Endothelial cell of umbilical vein (primary cell): ENCODE measurements at regions of chr16 and their contacts with region 1.

Region 1: DNA sequence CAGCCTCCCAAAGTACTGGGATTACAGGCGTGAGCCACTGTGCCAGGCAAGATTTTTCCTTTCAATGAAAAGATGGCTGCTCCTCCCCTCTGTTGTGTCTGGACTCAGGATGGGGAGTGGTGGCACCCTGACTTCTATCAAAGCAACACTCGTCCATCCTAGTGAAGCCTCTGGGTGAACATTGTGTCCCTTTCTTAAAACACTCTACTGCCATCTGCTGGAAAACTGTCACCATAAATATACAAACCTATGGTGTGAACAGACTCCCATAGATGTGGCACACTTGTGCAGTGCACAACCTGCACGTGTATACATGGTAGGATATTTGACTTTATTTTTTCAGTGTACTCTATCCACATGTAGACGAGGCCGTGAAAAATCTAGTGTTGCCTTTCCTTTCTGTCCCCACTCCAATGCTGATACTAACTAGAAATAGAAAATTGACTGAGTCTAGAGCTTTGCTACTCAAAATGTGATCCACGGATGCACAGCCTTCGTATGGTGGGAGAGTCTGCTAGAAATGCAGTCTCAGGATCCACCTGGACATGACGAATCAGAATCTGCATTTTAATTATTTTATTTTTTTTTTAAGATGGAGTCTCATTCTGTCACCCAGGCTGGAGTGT is 55.9 kb upstream of the PLCG2 start:
- DNase-seq: peak; percentile 85
- H3K4me3 ChIP-seq: no peak overlapping the region
- H3K27ac ChIP-seq: no peak overlapping the region
- H3K4me1 ChIP-seq: peaks cover 7% of the 10 kb centered on the region
- H3K27me3 ChIP-seq: peaks cover 0 to 3% of the 10 kb centered on the region in 2 experiments
- CTCF ChIP-seq: peak; percentile 47 to 53
- POLR2A ChIP-seq: no peak

Region 2: GRCh38 chr16:81429045-81429521 is 294.1 kb before region 1 on chr16:
- CTCF ChIA-PET with region 1: interaction called, 3 read pairs
- POLR2A ChIA-PET with region 1: no interaction called
- dilution Hi-C with region 1: no loop called
- intact Hi-C with region 1: loop called (anchors 1 kb)
- DNase-seq: peak; percentile 70
- H3K4me3 ChIP-seq: no peak overlapping the region
- H3K27ac ChIP-seq: no peak overlapping the region
- H3K4me1 ChIP-seq: no peaks in the 10 kb centered on the region
- H3K27me3 ChIP-seq: no peaks in the 10 kb centered on the region
- CTCF ChIP-seq: peak; percentile 49 to 69
- POLR2A ChIP-seq: no peak

Region 3: GRCh38 chr16:81551151-81551808 is 171.9 kb before region 1 on chr16:
- CTCF ChIA-PET with region 1: no interaction called
- POLR2A ChIA-PET with region 1: no interaction called
- dilution Hi-C with region 1: no loop called
- intact Hi-C with region 1: no loop called
- DNase-seq: peak; percentile 76
- H3K4me3 ChIP-seq: no peak overlapping the region
- H3K27ac ChIP-seq: peak overlapping the region; percentile 87
- H3K4me1 ChIP-seq: peaks cover 46% of the 10 kb centered on the region
- H3K27me3 ChIP-seq: no peaks in the 10 kb centered on the region
- CTCF ChIP-seq: no peak
- POLR2A ChIP-seq: no peak

Region 4: DNA sequence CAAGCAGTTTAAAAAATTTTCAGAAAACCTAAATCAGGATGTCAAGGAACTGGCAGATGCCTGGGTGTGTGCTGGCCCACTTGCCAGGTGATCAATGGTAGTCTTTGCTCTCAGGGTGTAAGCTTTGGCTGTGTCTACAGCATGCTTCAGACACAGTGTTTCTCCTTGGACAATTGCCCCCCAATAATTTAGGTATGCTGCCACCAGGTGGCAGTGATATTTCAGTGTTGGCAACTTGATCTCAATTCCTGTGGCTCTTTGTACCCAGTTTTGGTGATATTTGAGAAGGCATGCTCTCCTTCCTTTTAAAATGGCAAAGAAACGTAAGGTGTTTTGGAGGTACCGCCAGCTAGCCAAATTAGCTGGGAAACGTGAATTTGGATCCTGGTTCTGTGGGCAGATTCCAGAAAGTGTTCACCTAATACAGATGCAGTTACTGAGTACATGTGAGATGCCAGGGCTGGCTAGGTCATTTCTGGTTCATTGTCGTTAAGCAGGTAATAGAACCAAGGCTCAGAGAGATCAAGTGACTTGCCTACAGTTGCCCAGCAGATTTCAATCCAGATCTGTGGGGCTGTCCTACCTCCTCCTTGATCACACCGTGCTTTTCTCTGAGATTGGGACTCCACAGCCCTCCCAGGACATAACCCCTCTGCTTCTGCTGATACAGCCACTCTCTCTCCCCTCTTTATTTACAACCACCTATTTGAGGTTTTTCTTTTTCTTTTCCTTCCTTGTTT is 99.7 kb before region 1 on chr16:
- CTCF ChIA-PET with region 1: interaction called, 51 read pairs
- POLR2A ChIA-PET with region 1: no interaction called
- dilution Hi-C with region 1: no loop called
- intact Hi-C with region 1: loop called (anchors 1 kb)
- DNase-seq: peak; percentile 80
- H3K4me3 ChIP-seq: no peak overlapping the region
- H3K27ac ChIP-seq: no peak overlapping the region
- H3K4me1 ChIP-seq: peaks cover 31% of the 10 kb centered on the region
- H3K27me3 ChIP-seq: no peaks in the 10 kb centered on the region
- CTCF ChIP-seq: peak; percentile 57 to 59
- POLR2A ChIP-seq: no peak

Region 5: GRCh38 chr16:81778861-81779535 is 55.8 kb after region 1 on chr16 and contains the start of gene PLCG2:
- CTCF ChIA-PET with region 1: no interaction called
- POLR2A ChIA-PET with region 1: no interaction called
- dilution Hi-C with region 1: no loop called
- intact Hi-C with region 1: no loop called
- DNase-seq: peak; percentile 60
- H3K4me3 ChIP-seq: peak within 1 kb of the TSS; percentile 59 to 85 (median 70)
- H3K27ac ChIP-seq: no peak within 1 kb of the TSS
- H3K4me1 ChIP-seq: peaks cover 6% of the 10 kb centered on the region
- H3K27me3 ChIP-seq: peaks cover 5% of the 10 kb centered on the region in 2 experiments
- CTCF ChIP-seq: no peak
- POLR2A ChIP-seq: no peak
- total RNA-seq, gene PLCG2: 9.6 and 13.6 TPM in 2 replicates